GM10248 (cell line): ENCODE measurements at regions of chr7 and their contacts with region 1.

Region 1: DNA sequence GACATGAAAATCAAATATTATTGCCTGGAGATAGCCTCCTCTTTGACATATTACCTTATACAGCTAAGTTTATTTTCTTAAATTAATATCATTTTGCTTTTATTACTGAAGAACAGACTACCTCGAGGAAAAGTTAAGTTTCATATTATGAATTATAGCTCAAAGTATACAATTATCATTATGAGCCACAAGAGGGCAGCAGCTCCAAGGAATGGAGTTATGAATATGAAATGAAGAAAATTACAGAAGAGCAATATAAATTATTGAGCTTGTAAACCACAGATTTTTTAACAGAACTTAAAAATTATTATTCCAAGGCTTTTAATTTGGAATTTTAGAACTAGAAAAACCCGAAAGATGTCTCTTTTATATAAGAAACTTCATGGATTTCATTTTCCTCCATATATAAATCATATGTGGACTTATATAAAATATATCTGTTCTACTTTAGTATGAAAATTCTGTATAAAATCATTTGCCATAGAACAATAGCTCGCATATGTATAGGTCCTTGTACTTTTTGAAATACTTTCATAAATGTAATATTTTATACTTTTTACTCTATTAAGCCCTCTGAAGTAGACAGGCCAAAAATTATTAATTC is 40.1 kb downstream of the IQUB start:
- DNase-seq: peak; percentile 26
- CTCF ChIP-seq: peak; percentile 81

Region 2: GRCh38 chr7:122813845-122814244 is 680.5 kb before region 1 on chr7:
- CTCF ChIA-PET with region 1: no interaction called
- POLR2A ChIA-PET with region 1: no interaction called
- DNase-seq: no peak
- CTCF ChIP-seq: no peak

Region 3: DNA sequence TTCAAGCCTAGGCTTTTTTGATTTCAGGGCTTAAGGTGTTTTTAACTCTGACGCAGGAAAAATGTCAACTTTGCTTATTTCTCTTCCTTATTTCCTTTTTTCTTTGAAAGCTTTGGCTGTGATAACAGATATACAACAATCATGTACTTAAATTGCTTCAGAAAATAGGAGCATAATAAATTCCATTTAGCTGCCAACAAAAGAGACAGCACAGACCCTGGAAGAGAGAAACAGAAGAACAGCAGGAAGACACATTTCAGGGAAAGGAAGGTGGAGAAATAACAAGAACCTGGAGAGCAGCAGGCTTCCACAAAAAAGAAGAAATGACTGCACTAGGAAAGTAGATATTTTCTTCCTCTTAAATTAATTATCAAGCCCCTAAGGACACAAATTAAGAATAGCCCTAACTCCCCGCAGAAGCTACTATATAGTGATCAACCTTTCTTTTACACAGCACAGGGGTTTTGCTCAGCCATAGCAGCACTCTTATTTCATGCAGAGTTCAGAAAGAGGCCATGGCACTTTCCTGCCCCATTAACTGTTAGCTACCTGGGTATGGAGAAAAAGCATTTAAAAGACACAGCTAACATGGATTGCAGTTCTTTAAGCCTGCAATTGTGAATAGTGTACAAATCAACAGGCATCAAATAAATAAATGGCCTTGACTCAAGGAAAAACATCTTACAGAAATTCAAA is 21.4 kb before region 1 on chr7:
- CTCF ChIA-PET with region 1: interaction called, 14 read pairs
- POLR2A ChIA-PET with region 1: no interaction called
- DNase-seq: no peak
- CTCF ChIP-seq: no peak

Region 4: GRCh38 chr7:123480107-123480506 is 14.2 kb before region 1 on chr7:
- CTCF ChIA-PET with region 1: interaction called, 10 read pairs
- POLR2A ChIA-PET with region 1: no interaction called
- DNase-seq: no peak
- CTCF ChIP-seq: no peak